ENCODE measurements at regions of chr3 and their contacts with region 1.

Region 1: GRCh38 chr3:60086811-60087210 is 1037.0 kb upstream of the CFAP20DC start:
- DNase-seq: peak; percentile 54
- H3K4me3 Mint-ChIP-seq: peak overlapping the region; percentile 53
- H3K27ac Mint-ChIP-seq: peak overlapping the region; percentile 96
- H3K4me1 Mint-ChIP-seq: peaks cover 69% of the 10 kb centered on the region
- H3K27me3 Mint-ChIP-seq: no peaks in the 10 kb centered on the region

Region 2: DNA sequence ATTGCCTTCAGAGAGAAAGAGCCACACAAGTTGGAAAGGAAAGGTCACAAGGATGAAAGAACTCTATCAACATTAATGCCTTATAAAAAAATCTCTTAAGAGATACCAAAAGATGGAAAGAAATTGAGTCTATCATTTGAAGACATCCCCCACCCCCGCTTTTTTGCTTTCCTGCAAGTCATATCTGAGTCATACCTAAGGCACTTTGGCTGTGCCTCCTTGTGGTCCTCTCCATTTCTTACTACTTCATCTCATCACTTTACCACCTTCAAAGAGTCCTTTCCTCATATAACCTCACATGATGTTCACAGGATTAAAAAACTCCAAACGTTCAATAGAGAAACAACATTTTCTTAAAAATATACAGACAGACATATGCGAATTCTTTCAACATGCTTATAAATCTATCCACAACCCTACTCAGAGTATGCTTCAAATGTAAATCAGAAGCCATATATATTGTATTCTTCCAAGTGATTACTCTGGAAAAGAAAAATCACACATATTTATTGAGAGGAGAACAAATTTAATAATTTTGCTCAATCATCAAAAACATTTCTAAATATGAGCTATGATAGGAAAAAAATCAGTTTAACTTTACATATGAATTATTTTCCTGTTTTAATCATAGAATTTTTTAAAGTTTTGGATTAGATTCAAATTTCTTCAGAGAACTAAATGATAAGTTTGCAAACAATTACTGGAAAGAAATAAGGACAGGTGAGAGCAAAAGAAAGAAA is 33.1 kb before region 1 on chr3:
- intact Hi-C with region 1: loop called (anchors 1 kb)
- DNase-seq: no peak
- H3K4me3 Mint-ChIP-seq: peak overlapping the region; percentile 21
- H3K27ac Mint-ChIP-seq: peak overlapping the region; percentile 75
- H3K4me1 Mint-ChIP-seq: peaks cover 86% of the 10 kb centered on the region
- H3K27me3 Mint-ChIP-seq: no peaks in the 10 kb centered on the region

Region 3: DNA sequence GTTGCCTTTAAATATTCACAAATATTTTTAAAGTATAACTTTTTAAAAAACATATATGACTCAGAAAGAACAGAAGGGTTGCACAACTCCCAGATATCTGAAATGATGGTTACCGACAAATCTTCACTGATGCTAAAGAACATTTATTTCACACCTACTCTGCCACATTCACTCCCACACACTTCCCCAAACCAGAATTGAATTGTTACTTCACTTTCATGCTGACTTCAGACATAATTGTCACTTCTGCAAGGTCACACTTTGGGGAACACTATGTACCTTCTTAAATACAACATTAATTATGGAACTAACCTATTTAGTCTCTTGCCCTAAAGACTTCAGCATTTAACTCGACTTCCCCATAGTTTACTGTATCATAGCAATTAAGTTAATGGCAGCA is 369.4 kb after region 1 on chr3:
- intact Hi-C with region 1: loop called (anchors 10 kb)
- DNase-seq: no peak
- H3K4me3 Mint-ChIP-seq: no peak overlapping the region
- H3K27ac Mint-ChIP-seq: no peak overlapping the region
- H3K4me1 Mint-ChIP-seq: peaks cover 17% of the 10 kb centered on the region
- H3K27me3 Mint-ChIP-seq: no peaks in the 10 kb centered on the region

Measured in activated T-helper 1 cell treated with anti-CD3 and anti-CD28 coated beads, Interleukin-12 subunit alpha, Interleukin-12 subunit beta, Interleukin-2, Interleukin-4 antibody, amounts not matched to agents 30 ng/mL and 10 ng/mL and 1 ng/mL, durations not matched to agents 14 hours and 24 hours and 36 hours (primary cell).